A549 (cell line): ENCODE measurements at regions of chr9 and their contacts with region 1.

Region 1: GRCh38 chr9:32571969-32572899 is 725 bp downstream of the NDUFB6 start:
- DNase-seq: peak; percentile 79 to 89
- ATAC-seq: peak; percentile 95 to 96
- H3K4me3 ChIP-seq: peak overlapping the region; percentile 90
- H3K27ac ChIP-seq: peak overlapping the region; percentile 79 to 92
- H3K4me1 ChIP-seq: peaks cover 17% of the 10 kb centered on the region
- CTCF ChIP-seq: peak; percentile 67
- EP300 ChIP-seq: no peak
- POLR2A ChIP-seq: no peak
- RAD21 ChIP-seq: peak; percentile 55 to 64

Region 2: GRCh38 chr9:32384364-32385151 is 187.7 kb before region 1 on chr9 and contains the start of gene ACO1:
- CTCF ChIA-PET with region 1: interaction called, 507 read pairs
- POLR2A ChIA-PET with region 1: interaction called, 14 read pairs
- DNase-seq: peak; percentile 73 to 84
- ATAC-seq: peak; percentile 90 to 97
- H3K4me3 ChIP-seq: peak within 1 kb of the TSS; percentile 81
- H3K27ac ChIP-seq: peak within 1 kb of the TSS; percentile 62 to 89
- H3K4me1 ChIP-seq: peaks cover 5% of the 10 kb centered on the region; the same call in 1 of the 3 replicates
- CTCF ChIP-seq: no peak
- EP300 ChIP-seq: no peak
- POLR2A ChIP-seq: peak; percentile 85
- RAD21 ChIP-seq: peak in 1 of 2 experiments; percentile 18; a peak in 1 of 5 replicates
- polyA plus RNA-seq, gene ACO1: 40.2 and 41.0 TPM in 2 replicates

Region 3: GRCh38 chr9:32526041-32526706 is 46.1 kb before region 1 on chr9 and contains the start of gene RIGI:
- CTCF ChIA-PET with region 1: interaction called, 10 read pairs
- POLR2A ChIA-PET with region 1: no interaction called
- DNase-seq: peak; percentile 64 to 85
- ATAC-seq: peak; percentile 92 to 93
- H3K4me3 ChIP-seq: peak within 1 kb of the TSS; percentile 58
- H3K27ac ChIP-seq: peak within 1 kb of the TSS; percentile 46 to 83
- H3K4me1 ChIP-seq: peaks cover 6% of the 10 kb centered on the region; the same call in 2 of the 3 replicates
- CTCF ChIP-seq: peak; percentile 71
- EP300 ChIP-seq: no peak
- POLR2A ChIP-seq: 0 out of 2 replicates have a peak, but pooled peaks have one; percentile 19
- RAD21 ChIP-seq: peak; percentile 58 to 74
- polyA plus RNA-seq, gene RIGI: 3.9 and 4.8 TPM in 2 replicates

Region 4: DNA sequence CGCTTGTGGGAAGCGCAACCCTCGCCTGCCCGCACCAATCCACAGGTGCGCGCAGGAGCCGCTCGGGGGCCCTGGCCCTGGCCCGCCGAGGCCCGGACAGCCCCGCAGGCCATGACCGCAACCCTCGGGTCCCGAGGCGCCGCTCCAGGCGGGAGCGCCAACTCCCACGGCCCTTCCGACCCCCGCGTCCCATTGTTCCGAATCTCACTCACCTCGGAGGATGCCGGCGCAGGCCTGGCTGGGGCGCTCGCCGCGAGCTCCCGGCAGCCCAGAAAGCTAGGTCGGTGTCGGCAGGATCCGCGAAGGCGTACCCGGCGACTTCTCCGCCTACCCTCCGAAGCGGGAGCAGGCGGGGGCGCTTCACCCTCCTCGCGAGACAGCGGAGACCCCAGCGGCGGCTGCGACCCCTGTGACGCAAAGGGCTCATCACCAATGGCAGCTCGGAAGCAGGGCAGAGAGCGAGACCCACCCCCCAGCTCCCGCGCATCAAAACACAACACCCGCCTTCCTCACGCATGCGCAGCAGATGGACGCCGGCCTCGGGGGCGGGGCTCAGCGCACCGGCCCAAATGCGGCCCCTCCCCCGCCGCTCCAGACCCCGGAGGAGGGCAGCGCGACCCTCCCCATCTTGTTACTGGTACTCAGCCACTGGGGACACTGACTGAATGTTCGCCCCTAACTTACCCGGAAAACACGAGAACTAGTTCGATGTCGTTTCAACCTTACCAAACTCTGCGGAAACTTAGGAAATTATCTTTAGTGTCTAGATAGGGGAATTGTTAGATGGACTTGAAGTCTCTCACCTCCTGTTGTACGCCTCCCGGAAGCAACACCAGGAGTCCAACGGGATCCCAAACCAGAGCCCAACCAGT is 21.4 kb before region 1 on chr9:
- CTCF ChIA-PET with region 1: interaction called, 10 read pairs
- POLR2A ChIA-PET with region 1: interaction called, 5 read pairs
- DNase-seq: peak; percentile 93 to 97
- ATAC-seq: peak; percentile 70 to 85
- H3K4me3 ChIP-seq: peak overlapping the region; percentile 62
- H3K27ac ChIP-seq: peak overlapping the region; percentile 94 to 96
- H3K4me1 ChIP-seq: peaks cover 17% of the 10 kb centered on the region
- CTCF ChIP-seq: no peak
- EP300 ChIP-seq: no peak
- POLR2A ChIP-seq: no peak; the same call in 1 of the 2 replicates
- RAD21 ChIP-seq: no peak

Region 5: GRCh38 chr9:32558408-32558934 is 13.8 kb before region 1 on chr9:
- CTCF ChIA-PET with region 1: interaction called, 16 read pairs
- POLR2A ChIA-PET with region 1: interaction called, 5 read pairs
- DNase-seq: no peak
- ATAC-seq: no peak
- H3K4me3 ChIP-seq: no peak overlapping the region
- H3K27ac ChIP-seq: no peak overlapping the region
- H3K4me1 ChIP-seq: peaks cover 2% of the 10 kb centered on the region
- CTCF ChIP-seq: no peak
- EP300 ChIP-seq: no peak
- POLR2A ChIP-seq: no peak
- RAD21 ChIP-seq: no peak

Region 6: GRCh38 chr9:32968101-32969011 is 396.1 kb after region 1 on chr9:
- CTCF ChIA-PET with region 1: interaction called, 11 read pairs
- POLR2A ChIA-PET with region 1: no interaction called
- DNase-seq: peak; percentile 30 to 33
- ATAC-seq: peak in 1 of 2 experiments; percentile 63; a peak in 3 of 6 replicates
- H3K4me3 ChIP-seq: no peak overlapping the region
- H3K27ac ChIP-seq: no peak overlapping the region
- H3K4me1 ChIP-seq: no peaks in the 10 kb centered on the region
- CTCF ChIP-seq: peak; percentile 90
- EP300 ChIP-seq: no peak
- POLR2A ChIP-seq: no peak
- RAD21 ChIP-seq: peak; percentile 82 to 85